Colonic mucosa (tissue), 4 donors: ENCODE measurements at regions of chr13 and their contacts with region 1.

Region 1: GRCh38 chr13:33817901-33818706 is at the start of gene RFC3:
- DNase-seq: peak; percentile 93
- H3K4me3 ChIP-seq: peak within 1 kb of the TSS; percentile 82
- H3K27ac ChIP-seq: peak within 1 kb of the TSS; percentile 11
- H3K4me1 ChIP-seq: no peaks in the 10 kb centered on the region
- H3K27me3 ChIP-seq: no peaks in the 10 kb centered on the region
- CTCF ChIP-seq: no peak
- total RNA-seq, gene RFC3: 5.9 to 21.6 TPM

Region 2: DNA sequence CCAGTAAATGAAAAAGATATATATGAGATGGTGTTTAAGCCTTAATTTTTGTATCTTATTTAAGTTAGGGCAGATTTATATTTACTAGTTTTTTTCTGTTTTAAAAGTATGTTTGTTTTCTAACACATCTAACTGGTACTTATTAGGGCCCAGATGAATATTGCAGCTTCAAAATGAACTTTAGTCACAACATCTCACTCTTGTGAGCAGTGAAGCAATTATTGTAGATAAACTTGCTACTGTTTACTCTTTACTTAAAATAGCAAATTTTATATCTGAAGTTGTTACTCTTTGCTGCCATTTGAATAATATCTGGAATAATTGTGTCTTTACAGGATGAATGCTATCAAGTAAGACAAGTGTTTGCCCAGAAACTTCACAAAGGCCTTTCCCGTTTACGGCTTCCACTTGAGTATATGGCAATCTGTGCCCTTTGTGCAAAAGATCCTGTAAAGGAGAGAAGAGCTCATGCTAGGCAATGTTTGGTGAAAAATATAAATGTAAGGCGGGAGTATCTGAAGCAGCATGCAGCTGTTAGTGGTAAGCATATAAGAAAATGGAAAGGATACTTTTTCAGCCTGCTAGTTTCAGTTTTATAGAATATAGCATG is 1065.0 kb before region 1 on chr13:
- intact Hi-C with region 1: no loop called
- DNase-seq: no peak
- H3K4me3 ChIP-seq: no peak overlapping the region
- H3K27ac ChIP-seq: no peak overlapping the region
- H3K4me1 ChIP-seq: no peaks in the 10 kb centered on the region
- H3K27me3 ChIP-seq: no peaks in the 10 kb centered on the region
- CTCF ChIP-seq: no peak

Region 3: DNA sequence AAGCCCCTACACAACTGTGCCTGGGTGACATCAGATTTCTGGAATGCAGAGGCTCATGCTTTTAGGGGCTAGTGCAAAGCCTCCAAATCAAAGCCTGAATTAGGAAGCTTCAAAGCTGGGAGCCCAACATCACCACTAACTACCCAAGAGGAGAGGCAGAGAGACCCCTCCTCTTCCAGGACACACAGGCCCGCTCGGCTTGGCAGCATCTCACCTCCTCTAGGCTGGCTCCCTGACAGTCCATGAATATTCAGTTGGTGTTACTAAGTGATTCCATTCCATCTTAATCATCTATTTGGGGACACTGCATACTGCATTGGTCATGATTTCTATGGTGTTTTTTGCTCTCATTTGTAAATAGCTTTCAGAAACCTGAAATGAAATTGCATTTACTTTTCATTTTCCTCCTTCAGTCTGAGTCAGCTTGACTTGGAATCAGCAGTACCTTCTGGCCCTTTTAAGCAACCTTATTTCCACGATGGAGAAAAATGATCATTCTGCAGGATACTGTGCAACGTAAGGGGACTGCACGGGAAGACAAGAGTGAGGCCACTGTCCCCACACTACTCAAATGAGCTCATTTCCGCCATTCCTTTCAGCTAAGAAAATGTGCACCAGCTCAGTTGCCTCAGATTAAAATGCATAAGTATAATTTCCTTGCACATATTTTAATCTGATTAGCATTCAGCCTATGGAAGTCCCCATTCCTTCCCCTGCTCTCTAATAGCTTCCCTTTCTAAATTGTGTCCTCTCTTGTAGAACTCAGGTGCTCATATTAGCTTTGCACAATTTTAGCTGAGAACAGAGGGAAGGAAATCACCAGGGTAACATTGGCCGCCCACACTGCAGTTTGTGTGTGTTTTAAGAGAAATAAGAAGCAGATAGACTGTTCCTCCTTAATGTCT is 219.8 kb after region 1 on chr13:
- intact Hi-C with region 1: no loop called
- DNase-seq: no peak
- H3K4me3 ChIP-seq: no peak overlapping the region
- H3K27ac ChIP-seq: no peak overlapping the region
- H3K4me1 ChIP-seq: no peaks in the 10 kb centered on the region
- H3K27me3 ChIP-seq: no peaks in the 10 kb centered on the region
- CTCF ChIP-seq: no peak

Region 4: DNA sequence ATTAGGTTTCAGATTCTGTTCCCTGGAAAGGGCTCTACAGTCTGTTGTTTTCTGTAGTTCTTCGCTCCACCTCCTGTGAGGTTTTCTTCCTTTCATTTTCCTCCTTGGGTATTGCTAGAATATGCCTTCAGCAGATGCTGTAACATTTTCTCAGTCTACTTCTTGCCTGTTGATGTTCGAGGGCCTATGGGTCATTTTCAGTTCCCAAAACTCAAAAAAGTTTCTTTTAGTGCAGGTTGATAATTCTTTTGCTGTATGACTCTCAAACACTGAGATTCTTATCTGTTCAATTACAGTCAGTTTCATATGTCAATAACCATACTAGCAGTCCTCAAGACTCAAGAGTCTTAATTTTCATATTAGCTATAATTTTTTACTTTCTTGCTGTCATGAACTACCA is 268.2 kb after region 1 on chr13:
- intact Hi-C with region 1: loop called (anchors 10 kb)
- DNase-seq: no peak
- H3K4me3 ChIP-seq: no peak overlapping the region
- H3K27ac ChIP-seq: no peak overlapping the region
- H3K4me1 ChIP-seq: no peaks in the 10 kb centered on the region
- H3K27me3 ChIP-seq: no peaks in the 10 kb centered on the region
- CTCF ChIP-seq: no peak